ENCODE measurements at regions of chr16 and their contacts with region 1.

Region 1: DNA sequence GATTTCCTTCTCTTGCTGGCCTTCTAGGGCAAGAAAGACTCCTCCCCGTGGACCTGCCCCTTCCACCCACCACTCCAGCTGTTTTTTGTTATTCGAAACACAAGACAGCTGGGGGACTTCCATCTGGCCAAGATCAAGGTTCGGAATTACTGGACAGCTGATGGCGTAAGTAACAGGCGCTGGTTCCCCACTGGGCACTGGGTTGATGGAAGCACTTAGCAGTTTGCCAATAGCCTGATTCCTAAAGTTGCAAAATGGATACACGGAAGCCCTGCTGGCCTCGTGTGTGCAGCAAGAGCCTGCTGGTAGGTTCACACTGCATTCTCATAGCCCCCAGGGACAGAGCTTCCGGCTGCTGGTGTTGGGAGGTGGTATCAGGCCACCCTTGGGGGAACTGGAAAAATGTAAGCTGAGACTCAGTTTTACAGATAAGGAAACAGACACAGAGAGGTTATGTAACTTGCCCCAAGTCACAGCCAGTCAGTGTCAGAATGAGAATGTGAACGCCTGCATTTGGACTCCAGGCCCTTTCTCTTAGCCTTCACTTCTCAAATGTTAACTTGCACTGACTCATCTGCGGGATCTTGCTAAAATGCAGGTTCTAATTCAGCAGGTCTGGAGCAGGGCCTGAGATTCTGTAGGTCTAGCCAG is 171.7 kb downstream of the KATNIP start:
- DNase-seq: peak; percentile 59 to 86 (median 72)
- H3K4me3 ChIP-seq: no peak overlapping the region
- H3K27ac ChIP-seq: peak overlapping the region in 1 of 2 donors; percentile 81
- H3K4me1 ChIP-seq: peaks cover 12% of the 10 kb centered on the region
- H3K27me3 ChIP-seq: no peaks in the 10 kb centered on the region
- CTCF ChIP-seq: no peak
- EP300 ChIP-seq: peak; percentile 54
- POLR2A ChIP-seq: no peak

Region 2: DNA sequence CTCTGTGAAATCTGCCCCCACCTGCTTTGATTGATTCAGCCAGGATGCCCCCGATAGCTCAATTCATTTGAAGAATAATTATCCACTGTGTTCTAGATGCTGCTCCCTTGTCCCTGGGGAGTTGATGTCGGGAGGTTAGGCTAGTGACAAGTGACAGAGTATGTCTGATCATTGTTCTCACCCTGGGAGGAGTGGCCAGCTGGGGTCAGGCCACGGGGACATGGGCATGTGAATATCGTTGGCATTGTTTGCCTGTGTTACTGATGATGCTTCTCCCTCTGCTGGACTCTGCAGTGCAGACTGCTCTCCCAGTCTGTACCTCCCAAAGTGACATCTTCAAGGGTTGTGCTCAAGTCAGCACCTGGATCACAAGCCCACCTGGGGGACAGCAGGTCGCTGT is 744.8 kb before region 1 on chr16:
- intact Hi-C with region 1: loop called in 1 of 4 experiments (anchors 10 kb)
- DNase-seq: no peak
- H3K4me3 ChIP-seq: no peak overlapping the region
- H3K27ac ChIP-seq: no peak overlapping the region
- H3K4me1 ChIP-seq: no peaks in the 10 kb centered on the region
- H3K27me3 ChIP-seq: no peaks in the 10 kb centered on the region
- CTCF ChIP-seq: no peak
- EP300 ChIP-seq: no peak
- POLR2A ChIP-seq: no peak

Region 3: GRCh38 chr16:27268376-27269299 is 453.0 kb before region 1 on chr16 and contains the start of gene NSMCE1:
- intact Hi-C with region 1: loop called in 1 of 4 experiments (anchors 10 kb)
- DNase-seq: peak; percentile 97 to 99 (median 99)
- H3K4me3 ChIP-seq: peak within 1 kb of the TSS; percentile 91
- H3K27ac ChIP-seq: peak within 1 kb of the TSS in 1 of 2 donors; percentile 50
- H3K4me1 ChIP-seq: peaks cover 8% of the 10 kb centered on the region
- H3K27me3 ChIP-seq: no peaks in the 10 kb centered on the region
- CTCF ChIP-seq: peak in 2 of 3 donors; percentile 37 to 38
- EP300 ChIP-seq: no peak
- POLR2A ChIP-seq: peak; percentile 65
- total RNA-seq, gene NSMCE1: 19.8 to 68.4 (median 48.9) TPM

Region 4: GRCh38 chr16:27762441-27762840 is 40.8 kb after region 1 on chr16:
- intact Hi-C with region 1: no loop called
- DNase-seq: no peak
- H3K4me3 ChIP-seq: no peak overlapping the region
- H3K27ac ChIP-seq: no peak overlapping the region
- H3K4me1 ChIP-seq: no peaks in the 10 kb centered on the region
- H3K27me3 ChIP-seq: no peaks in the 10 kb centered on the region
- CTCF ChIP-seq: no peak
- EP300 ChIP-seq: no peak
- POLR2A ChIP-seq: no peak

Region 5: DNA sequence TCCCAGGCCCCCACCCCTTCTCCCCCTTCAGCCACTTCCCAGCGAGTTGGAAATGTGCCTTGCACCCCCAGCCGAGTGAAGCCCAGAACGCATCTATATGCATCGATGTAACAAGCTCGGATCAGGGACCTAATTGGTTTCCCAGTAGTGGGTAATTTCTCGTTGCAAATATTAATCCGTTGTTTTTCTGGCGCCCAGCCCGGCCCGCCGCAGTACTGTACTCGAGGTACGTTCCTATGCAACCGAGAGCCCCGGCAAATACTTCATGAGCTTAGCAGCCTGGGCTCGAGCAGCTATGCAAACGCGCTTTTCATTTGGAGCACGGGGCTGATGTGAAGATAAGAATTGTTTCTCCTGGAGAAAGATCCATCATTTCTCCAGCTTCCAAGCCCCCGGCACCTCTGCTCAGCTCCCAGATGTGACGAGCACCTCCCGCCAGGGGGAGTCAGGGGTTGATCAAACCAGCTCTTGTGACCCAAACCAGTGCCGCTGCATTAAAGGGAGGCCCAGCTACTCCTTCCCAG is 58.0 kb after region 1 on chr16:
- intact Hi-C with region 1: loop called in 1 of 4 experiments (anchors 10 kb)
- DNase-seq: peak; percentile 48 to 77 (median 60)
- H3K4me3 ChIP-seq: no peak overlapping the region
- H3K27ac ChIP-seq: no peak overlapping the region
- H3K4me1 ChIP-seq: peaks cover 1% of the 10 kb centered on the region
- H3K27me3 ChIP-seq: no peaks in the 10 kb centered on the region
- CTCF ChIP-seq: no peak
- EP300 ChIP-seq: no peak
- POLR2A ChIP-seq: no peak